ENCODE measurements at regions of chr7 and their contacts with region 1.

Region 1: DNA sequence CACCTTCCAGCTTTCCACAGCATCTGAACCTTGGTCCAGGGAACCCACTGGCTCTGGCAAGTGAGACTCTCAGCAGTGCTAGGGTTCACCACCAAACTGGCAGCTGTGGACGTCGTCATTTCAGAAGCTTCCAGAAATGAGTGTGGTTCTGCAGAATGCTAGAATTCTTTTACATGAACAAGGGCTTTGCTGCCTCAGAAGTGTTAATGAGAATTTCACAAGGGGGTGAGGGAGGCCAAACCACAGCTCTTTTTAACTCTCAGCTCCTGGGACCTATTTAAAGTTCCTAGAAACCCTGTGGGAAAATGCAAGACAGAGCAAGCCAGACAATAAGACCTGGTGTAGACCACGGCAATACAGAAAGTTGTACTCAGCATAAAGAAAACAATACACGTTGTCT is 129.3 kb upstream of the BET1 start:
- DNase-seq: no peak
- ATAC-seq: no peak
- H3K4me3 ChIP-seq: no peak overlapping the region
- H3K27ac ChIP-seq: no peak overlapping the region
- H3K4me1 ChIP-seq: no peaks in the 10 kb centered on the region
- H3K27me3 ChIP-seq: no peaks in the 10 kb centered on the region
- CTCF ChIP-seq: no peak

Region 2: GRCh38 chr7:94069162-94069739 is 64.2 kb before region 1 on chr7:
- intact Hi-C with region 1: loop called in 1 of 2 experiments (anchors 2 kb)
- DNase-seq: no peak
- ATAC-seq: no peak
- H3K4me3 ChIP-seq: no peak overlapping the region
- H3K27ac ChIP-seq: no peak overlapping the region
- H3K4me1 ChIP-seq: no peaks in the 10 kb centered on the region
- H3K27me3 ChIP-seq: peaks cover 0 to 3% (median 0%) of the 10 kb centered on the region in 3 donors
- CTCF ChIP-seq: no peak